Activated CD8-positive, alpha-beta memory T cell treated with anti-CD3 and anti-CD28 coated beads, Interleukin-2, amount 10 ng/mL, durations not matched to agents 7 days and 5 days (primary cell): ENCODE measurements at regions of chr2 and their contacts with region 1.

Region 1: DNA sequence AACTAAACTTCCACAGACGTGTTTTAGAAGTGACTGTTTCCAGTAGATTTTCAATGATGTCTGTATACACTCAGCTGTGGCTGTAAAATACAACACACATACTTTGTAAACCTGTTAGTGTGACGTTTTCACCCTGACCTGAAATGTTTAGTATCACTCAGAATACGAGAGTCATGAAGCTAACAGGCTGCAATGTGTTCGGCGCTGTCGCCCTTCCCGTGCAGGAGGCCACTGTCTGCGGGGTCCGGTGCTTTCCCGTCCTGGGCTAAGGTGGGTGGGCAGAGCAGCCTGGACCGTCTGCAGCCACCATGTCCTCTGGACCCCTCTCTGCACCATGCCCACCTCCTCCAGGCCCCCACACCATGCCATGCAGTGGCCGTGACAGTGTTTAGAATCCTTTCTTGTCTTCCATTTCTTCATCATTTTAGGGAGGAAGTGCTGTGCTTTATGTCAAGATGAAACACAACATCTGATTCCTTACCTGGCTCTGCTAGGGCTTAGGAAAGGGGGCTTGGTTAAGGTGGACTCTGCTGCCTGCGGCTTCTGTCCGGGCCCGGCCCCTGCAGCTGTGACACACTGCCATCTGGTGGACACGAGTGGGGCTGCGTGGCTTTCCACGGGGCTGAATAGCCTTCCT is 53.8 kb upstream of the RBM44 start:
- DNase-seq: peak; percentile 78
- ATAC-seq: peak; percentile 86
- H3K4me3 Mint-ChIP-seq: no peak overlapping the region
- H3K27ac Mint-ChIP-seq: peak overlapping the region; percentile 41
- H3K4me1 Mint-ChIP-seq: peaks cover 19% of the 10 kb centered on the region
- H3K27me3 Mint-ChIP-seq: no peaks in the 10 kb centered on the region

Region 2: GRCh38 chr2:237547841-237548416 is 196.8 kb before region 1 on chr2:
- CTCF ChIA-PET with region 1: no interaction called
- DNase-seq: no peak
- ATAC-seq: no peak
- H3K4me3 Mint-ChIP-seq: no peak overlapping the region
- H3K27ac Mint-ChIP-seq: no peak overlapping the region
- H3K4me1 Mint-ChIP-seq: no peaks in the 10 kb centered on the region
- H3K27me3 Mint-ChIP-seq: peaks cover 10% of the 10 kb centered on the region

Region 3: GRCh38 chr2:237581751-237582746 is 162.7 kb before region 1 on chr2:
- CTCF ChIA-PET with region 1: interaction called, 16 read pairs
- DNase-seq: peak; percentile 80
- ATAC-seq: peak; percentile 89
- H3K4me3 Mint-ChIP-seq: no peak overlapping the region
- H3K27ac Mint-ChIP-seq: peak overlapping the region; percentile 59
- H3K4me1 Mint-ChIP-seq: peaks cover 4% of the 10 kb centered on the region
- H3K27me3 Mint-ChIP-seq: peaks cover 5% of the 10 kb centered on the region

Region 4: DNA sequence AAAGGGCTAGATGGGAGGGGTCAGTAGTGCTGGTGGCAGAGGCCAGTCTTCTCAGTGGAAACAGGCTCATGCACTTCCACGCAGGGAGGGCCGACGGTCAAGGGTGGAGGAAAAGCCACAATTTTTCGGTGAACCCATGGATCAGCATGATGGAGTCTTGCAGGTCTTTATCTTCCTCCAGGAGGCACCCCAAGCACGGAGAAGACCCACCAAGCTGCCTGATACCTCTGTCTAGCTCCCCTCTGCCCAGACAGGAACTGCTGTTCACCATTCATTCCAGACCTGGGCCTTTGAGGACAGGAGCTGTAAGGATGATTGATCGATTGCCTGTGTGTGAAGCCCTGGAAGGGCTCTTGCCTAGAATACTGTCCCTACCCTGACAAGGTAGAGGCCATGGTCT is 120.2 kb before region 1 on chr2:
- CTCF ChIA-PET with region 1: interaction called, 11 read pairs
- DNase-seq: no peak
- ATAC-seq: no peak
- H3K4me3 Mint-ChIP-seq: no peak overlapping the region
- H3K27ac Mint-ChIP-seq: no peak overlapping the region
- H3K4me1 Mint-ChIP-seq: peaks cover 10% of the 10 kb centered on the region
- H3K27me3 Mint-ChIP-seq: peaks cover 51% of the 10 kb centered on the region

Region 5: GRCh38 chr2:237691908-237692600 is 52.7 kb before region 1 on chr2:
- CTCF ChIA-PET with region 1: interaction called, 44 read pairs
- DNase-seq: peak; percentile 96
- ATAC-seq: peak; percentile 71
- H3K4me3 Mint-ChIP-seq: peak overlapping the region; percentile 97
- H3K27ac Mint-ChIP-seq: peak overlapping the region; percentile 94
- H3K4me1 Mint-ChIP-seq: peaks cover 51% of the 10 kb centered on the region
- H3K27me3 Mint-ChIP-seq: no peaks in the 10 kb centered on the region

Region 6: GRCh38 chr2:237700512-237701032 is 44.2 kb before region 1 on chr2:
- CTCF ChIA-PET with region 1: interaction called, 44 read pairs
- DNase-seq: peak; percentile 76
- ATAC-seq: peak; percentile 38
- H3K4me3 Mint-ChIP-seq: peak overlapping the region; percentile 55
- H3K27ac Mint-ChIP-seq: peak overlapping the region; percentile 82
- H3K4me1 Mint-ChIP-seq: peaks cover 94% of the 10 kb centered on the region
- H3K27me3 Mint-ChIP-seq: no peaks in the 10 kb centered on the region

Region 7: GRCh38 chr2:237731663-237732062 is 13.1 kb before region 1 on chr2:
- CTCF ChIA-PET with region 1: interaction called, 24 read pairs
- DNase-seq: peak; percentile 68
- ATAC-seq: peak; percentile 92
- H3K4me3 Mint-ChIP-seq: no peak overlapping the region
- H3K27ac Mint-ChIP-seq: peak overlapping the region; percentile 73
- H3K4me1 Mint-ChIP-seq: peaks cover 53% of the 10 kb centered on the region
- H3K27me3 Mint-ChIP-seq: no peaks in the 10 kb centered on the region